Activated T-helper 2 cell treated with anti-CD3 and anti-CD28 coated beads, Interferon-gamma antibody, Interleukin-2, Interleukin-4, amounts not matched to agents 10 μg/mL and 5 μg/mL and 100 μg/mL, durations not matched to agents 14 hours and 24 hours and 36 hours (primary cell): ENCODE measurements at regions of chr6 and their contacts with region 1.

Region 1: DNA sequence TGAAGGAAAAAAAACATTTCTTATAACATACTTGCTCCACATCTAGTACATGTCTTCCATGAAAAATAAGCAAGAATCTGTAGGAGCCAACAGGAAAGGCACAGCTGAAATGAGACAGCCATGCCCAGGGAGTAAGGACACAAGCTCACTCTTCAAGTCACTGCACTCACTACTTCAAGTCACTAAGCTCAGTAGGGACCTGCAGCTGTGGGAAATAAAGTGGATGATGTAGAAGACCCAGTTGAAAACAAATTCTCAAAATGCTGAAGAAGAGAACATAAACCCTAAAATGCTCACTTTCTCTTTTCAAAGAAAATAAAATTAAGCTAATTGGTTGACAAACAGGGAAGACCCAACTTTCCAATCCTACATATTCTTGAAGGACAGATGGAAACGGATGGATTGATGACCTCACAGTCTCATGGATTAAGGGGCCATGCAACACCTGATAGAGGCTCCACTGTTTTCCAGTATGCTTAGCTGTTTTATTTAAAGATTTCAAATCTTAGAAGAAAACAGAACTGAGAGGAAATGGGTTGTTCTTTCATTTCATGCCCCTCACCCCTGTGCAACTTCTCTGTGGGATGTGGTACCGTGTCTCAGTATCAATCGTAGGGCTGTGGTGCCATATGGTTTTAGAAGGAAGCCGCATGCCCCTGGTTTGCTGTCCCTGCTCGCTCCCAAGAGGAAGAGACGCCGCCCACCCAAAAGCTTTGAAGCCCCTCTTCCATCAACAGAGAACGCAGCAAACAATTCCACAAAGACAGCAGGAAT is 133.3 kb downstream of the WDR27 start:
- DNase-seq: no peak
- H3K4me3 Mint-ChIP-seq: no peak overlapping the region
- H3K27ac Mint-ChIP-seq: no peak overlapping the region
- H3K4me1 Mint-ChIP-seq: peaks cover 16% of the 10 kb centered on the region
- H3K27me3 Mint-ChIP-seq: peaks cover 13% of the 10 kb centered on the region

Region 2: GRCh38 chr6:169556758-169557548 is 11.5 kb before region 1 on chr6:
- intact Hi-C with region 1: loop called (anchors 1 kb)
- DNase-seq: peak; percentile 36
- H3K4me3 Mint-ChIP-seq: no peak overlapping the region
- H3K27ac Mint-ChIP-seq: peak overlapping the region; percentile 40
- H3K4me1 Mint-ChIP-seq: peaks cover 21% of the 10 kb centered on the region
- H3K27me3 Mint-ChIP-seq: peaks cover 19% of the 10 kb centered on the region

Region 3: DNA sequence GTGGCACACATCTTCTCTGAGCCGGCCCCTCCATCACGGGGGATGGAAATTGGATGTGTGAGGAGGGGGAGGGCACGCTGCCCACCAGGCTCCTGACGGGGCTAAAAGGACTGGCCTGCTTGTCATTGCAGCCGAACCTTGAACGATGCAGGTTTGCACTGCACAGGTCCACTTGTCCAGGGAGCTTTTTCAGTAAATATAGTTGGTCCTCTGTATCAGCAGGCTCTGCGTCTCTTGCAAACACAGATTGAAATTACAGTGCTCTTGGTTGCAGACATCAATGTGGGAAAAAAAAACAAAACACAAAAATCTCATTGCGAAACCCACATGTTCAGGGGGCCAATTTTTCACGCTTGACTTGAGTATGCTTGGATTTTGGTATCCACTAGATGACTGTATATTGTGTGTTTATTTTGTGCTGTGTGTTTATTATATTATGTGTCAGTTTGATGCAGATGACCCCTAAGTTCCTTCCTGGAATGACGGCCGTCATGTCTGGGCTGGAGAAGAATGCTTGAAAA is 212.1 kb after region 1 on chr6:
- intact Hi-C with region 1: no loop called
- DNase-seq: no peak
- H3K4me3 Mint-ChIP-seq: no peak overlapping the region
- H3K27ac Mint-ChIP-seq: no peak overlapping the region
- H3K4me1 Mint-ChIP-seq: no peaks in the 10 kb centered on the region
- H3K27me3 Mint-ChIP-seq: no peaks in the 10 kb centered on the region